Activated naive CD4-positive, alpha-beta T cell treated with anti-CD3 and anti-CD28 coated beads for 36 hours (primary cell): ENCODE measurements at regions of chr3 and their contacts with region 1.

Region 1: GRCh38 chr3:45037734-45038455 is 11.8 kb downstream of the CLEC3B start:
- DNase-seq: peak; percentile 97
- H3K4me3 Mint-ChIP-seq: peak overlapping the region; percentile 17
- H3K27ac Mint-ChIP-seq: no peak overlapping the region
- H3K4me1 Mint-ChIP-seq: peaks cover 41% of the 10 kb centered on the region
- H3K27me3 Mint-ChIP-seq: peaks cover 16% of the 10 kb centered on the region

Region 2: GRCh38 chr3:44529927-44530326 is 508.0 kb before region 1 on chr3:
- CTCF ChIA-PET with region 1: interaction called, 3 read pairs
- intact Hi-C with region 1: loop called (anchors 1 kb)
- DNase-seq: peak; percentile 44
- H3K4me3 Mint-ChIP-seq: no peak overlapping the region
- H3K27ac Mint-ChIP-seq: no peak overlapping the region
- H3K4me1 Mint-ChIP-seq: no peaks in the 10 kb centered on the region
- H3K27me3 Mint-ChIP-seq: peaks cover 17% of the 10 kb centered on the region

Region 3: DNA sequence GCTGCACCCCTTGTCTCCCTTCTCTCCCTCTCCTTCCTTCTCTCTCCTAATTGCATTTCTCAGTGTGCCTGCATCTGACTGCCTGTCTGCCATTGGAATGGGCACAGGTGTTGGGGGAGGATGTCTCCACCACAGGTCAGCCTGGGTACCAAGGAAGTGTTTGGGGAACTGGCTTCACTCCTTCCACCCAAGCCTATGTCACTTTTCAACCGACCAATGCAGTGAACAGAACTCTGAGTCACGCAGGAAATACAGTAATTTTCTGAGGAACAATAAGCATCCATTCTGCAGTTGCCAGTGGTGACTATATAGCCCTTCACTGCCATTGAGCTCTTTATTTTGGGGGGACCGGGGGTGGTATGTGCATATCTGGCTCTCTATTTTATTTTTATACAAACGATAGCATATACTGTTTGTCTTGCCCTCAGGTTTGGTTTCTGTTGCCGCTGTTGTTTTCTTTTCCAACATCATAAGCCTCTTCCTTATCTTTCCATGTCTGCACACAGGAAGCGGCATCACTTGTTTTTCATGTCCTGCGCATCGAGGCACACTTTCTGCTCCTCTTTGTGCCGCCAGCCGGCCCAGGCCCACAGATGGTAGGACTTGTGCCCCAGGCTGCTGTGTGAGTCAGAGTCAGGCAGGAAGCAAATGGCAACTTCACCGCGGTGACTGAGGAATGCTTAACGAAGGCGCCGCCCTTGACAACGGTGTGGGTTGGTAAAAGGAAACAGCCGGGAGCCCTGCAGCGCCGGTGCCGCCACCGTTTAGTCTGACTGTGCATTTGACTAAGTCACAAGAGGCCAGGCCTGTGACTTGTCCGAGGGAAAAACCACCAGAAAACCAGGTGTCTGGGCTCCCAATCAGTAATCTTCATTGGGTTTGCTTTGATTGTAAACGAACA is 129.4 kb after region 1 on chr3:
- CTCF ChIA-PET with region 1: no interaction called
- intact Hi-C with region 1: loop called (anchors 1 kb)
- DNase-seq: peak; percentile 95
- H3K4me3 Mint-ChIP-seq: peak overlapping the region; percentile 55
- H3K27ac Mint-ChIP-seq: peak overlapping the region; percentile 88
- H3K4me1 Mint-ChIP-seq: peaks cover 19% of the 10 kb centered on the region
- H3K27me3 Mint-ChIP-seq: no peaks in the 10 kb centered on the region

Region 4: GRCh38 chr3:45224824-45225464 is 187.0 kb after region 1 on chr3:
- CTCF ChIA-PET with region 1: interaction called, 8 read pairs
- intact Hi-C with region 1: loop called (anchors 1 kb)
- DNase-seq: peak; percentile 57
- H3K4me3 Mint-ChIP-seq: peak overlapping the region; percentile 71
- H3K27ac Mint-ChIP-seq: no peak overlapping the region
- H3K4me1 Mint-ChIP-seq: peaks cover 10% of the 10 kb centered on the region
- H3K27me3 Mint-ChIP-seq: peaks cover 64% of the 10 kb centered on the region

Region 5: GRCh38 chr3:45832691-45833090 is 794.8 kb after region 1 on chr3:
- CTCF ChIA-PET with region 1: no interaction called
- intact Hi-C with region 1: loop called (anchors 5 kb)
- DNase-seq: peak; percentile 30
- H3K4me3 Mint-ChIP-seq: no peak overlapping the region
- H3K27ac Mint-ChIP-seq: no peak overlapping the region
- H3K4me1 Mint-ChIP-seq: peaks cover 3% of the 10 kb centered on the region
- H3K27me3 Mint-ChIP-seq: no peaks in the 10 kb centered on the region